Activated naive CD4-positive, alpha-beta T cell treated with anti-CD3 and anti-CD28 coated beads for 36 hours (primary cell): ENCODE measurements at regions of chr11 and their contacts with region 1.

Region 1: GRCh38 chr11:67353317-67354074 is at the start of gene POLD4:
- DNase-seq: peak; percentile 97
- H3K4me3 Mint-ChIP-seq: peak within 1 kb of the TSS; percentile 92
- H3K27ac Mint-ChIP-seq: peak within 1 kb of the TSS; percentile 97
- H3K4me1 Mint-ChIP-seq: peaks cover 54% of the 10 kb centered on the region
- H3K27me3 Mint-ChIP-seq: no peaks in the 10 kb centered on the region
- total RNA-seq, gene POLD4: 40.7 to 42.0 TPM

Region 2: DNA sequence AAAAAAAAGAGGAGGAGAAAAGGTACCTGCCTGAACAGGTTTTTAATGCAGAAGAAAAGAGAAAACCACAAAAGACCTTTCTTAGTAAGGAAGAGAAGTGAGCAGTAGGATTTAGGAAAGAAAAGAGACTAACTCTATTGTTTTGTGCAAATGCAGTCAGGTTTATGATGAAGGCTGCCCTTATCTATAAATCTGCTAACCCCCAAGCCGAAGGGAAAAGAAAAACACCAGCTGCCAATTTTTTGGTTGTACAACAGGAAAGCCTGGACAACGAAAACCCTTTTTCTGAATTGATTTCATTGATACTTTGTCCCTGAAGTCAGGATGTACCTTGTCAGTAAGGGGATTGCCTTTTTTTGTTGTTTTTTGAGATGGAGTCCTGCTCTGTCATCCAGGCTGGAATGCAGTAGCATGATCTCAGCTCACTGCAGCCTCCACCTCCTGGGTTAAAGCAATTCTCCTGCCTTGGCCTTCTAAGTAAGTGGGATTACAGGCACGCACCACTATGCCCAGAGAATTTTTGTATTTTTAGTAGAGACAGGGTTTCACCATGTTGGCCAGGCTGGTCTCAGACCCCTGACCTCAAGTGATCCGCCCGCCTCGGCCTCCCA is 21.3 kb before region 1 on chr11:
- CTCF ChIA-PET with region 1: interaction called, 12 read pairs
- intact Hi-C with region 1: no loop called
- DNase-seq: no peak
- H3K4me3 Mint-ChIP-seq: no peak overlapping the region
- H3K27ac Mint-ChIP-seq: no peak overlapping the region
- H3K4me1 Mint-ChIP-seq: no peaks in the 10 kb centered on the region
- H3K27me3 Mint-ChIP-seq: no peaks in the 10 kb centered on the region

Region 3: DNA sequence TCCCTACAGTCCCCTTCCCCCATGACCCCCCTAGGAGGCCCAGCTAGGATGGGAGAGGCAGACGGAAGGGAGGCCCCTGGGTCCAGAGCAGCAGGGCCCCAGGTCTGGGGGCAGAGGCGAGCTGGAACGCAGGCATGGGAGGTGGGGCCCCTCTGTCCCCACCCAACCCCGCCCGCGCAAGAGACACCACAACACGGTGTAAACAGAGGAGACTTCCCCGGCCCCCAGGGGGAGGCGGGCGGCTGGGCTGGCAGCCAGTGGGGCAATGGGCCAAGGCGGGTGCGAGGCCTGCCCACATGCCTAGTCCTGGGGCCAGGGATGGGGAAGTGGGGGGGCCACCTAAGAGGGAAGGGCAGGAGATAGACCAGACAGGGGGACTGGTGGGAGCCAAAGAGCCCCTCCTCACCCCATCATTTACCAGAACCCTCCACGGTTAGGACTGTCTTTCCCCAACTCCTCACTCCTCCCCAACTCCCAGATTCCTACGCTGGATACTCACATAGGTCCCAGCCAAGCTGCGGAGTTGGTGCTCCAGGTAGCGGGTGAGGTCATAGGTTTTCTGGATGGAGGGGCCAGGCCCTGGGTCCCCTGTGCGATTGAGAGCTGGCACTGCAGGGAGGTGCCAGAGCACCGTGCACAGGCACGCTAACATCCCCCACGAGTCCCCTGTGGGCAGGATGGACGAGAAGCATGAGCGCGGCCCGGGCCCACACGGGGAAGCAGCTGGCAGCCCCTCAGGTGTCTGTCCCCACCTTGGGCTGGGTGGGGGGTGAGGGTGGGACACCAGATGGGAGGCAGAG is 13.7 kb after region 1 on chr11:
- CTCF ChIA-PET with region 1: interaction called, 636 read pairs
- intact Hi-C with region 1: no loop called
- DNase-seq: no peak
- H3K4me3 Mint-ChIP-seq: no peak overlapping the region
- H3K27ac Mint-ChIP-seq: no peak overlapping the region
- H3K4me1 Mint-ChIP-seq: peaks cover 21% of the 10 kb centered on the region
- H3K27me3 Mint-ChIP-seq: peaks cover 13% of the 10 kb centered on the region

Region 4: DNA sequence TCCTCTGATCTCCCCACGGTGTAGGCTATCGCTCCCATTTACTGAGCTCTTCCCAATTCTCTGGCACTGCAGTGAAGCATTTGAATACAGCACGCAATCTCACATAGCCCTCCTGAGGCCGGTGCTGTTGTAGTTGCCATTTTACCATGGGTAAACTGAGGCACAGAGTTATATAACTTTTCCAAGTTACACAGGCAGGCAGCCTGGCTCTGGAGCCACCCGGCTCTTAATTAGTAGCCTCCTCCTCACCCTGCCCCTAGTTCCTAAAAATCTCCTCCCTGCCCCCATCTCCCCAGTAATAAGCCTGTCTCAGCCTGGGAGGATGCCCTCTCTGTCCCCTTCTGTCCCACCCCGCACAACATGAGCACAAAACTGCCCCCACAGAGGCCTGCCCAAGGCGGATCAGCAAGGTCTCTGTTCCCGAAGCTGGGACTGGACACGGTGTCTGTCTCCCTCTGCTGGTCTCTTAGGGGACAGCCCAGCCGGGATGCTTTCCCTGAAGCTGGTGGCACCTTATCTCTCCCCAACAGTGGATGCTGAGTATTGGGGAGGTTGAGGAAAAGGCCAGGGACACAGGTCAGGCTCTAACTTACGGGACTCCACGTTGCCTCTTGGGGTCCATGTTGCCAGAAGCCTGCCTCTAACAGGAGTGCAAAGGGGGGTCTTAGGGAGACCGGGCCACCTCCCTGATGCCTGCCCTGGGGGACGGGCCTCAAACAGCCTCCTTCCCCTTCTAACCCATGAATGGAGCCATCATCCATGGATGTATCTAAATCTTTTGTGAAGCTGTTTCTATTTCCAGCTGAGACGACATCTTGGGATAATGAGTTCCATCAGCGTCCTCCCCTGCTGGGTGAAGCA is 29.0 kb after region 1 on chr11:
- CTCF ChIA-PET with region 1: interaction called, 636 read pairs
- intact Hi-C with region 1: loop called (anchors 1 kb)
- DNase-seq: peak; percentile 92
- H3K4me3 Mint-ChIP-seq: no peak overlapping the region
- H3K27ac Mint-ChIP-seq: no peak overlapping the region
- H3K4me1 Mint-ChIP-seq: peaks cover 2% of the 10 kb centered on the region
- H3K27me3 Mint-ChIP-seq: peaks cover 2% of the 10 kb centered on the region

Region 5: DNA sequence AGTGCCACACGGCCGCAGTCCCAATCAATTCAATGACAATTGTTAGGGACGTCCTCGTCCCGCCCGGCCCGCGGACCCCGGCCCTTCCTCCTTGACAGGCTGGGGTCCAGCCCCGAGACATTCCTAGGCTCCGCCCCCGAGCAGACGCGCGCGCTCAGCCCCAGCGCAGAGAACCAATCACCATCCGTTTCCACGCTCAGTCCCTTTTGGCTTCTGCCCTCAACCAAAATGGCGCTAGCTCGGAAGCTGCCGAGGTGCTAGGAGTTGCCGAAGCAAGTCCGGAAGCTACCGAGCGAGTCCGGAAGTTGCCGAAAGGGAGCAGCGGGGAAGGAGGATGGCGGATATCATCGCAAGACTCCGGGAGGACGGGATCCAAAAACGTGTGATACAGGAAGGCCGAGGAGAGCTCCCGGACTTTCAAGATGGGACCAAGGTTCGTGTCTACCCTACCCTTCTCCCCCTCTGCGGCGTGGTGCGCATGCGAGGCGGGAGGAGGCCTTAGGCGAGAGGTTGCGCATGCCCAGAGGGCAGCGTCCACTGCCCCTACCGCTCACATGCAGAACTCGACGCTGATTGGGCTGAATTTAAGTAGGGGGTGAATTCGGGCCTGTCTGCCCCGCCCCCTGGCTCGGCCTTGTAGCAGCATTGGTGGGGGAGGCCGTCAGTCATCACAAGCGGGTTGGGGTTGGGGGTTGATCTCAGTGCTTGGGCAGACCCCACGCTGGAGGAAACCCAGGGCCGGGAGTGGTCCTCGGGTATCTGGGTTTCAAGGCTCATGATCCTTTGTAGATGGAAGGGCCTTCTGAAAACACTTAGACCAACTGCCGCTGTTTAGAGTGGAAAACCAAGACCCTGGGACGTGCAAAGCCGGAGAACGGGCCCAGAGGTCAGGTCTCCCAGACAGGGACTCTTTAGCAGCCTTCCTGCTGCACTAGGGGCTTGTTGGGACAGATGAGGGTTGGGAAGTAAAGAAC is 129.6 kb after region 1 on chr11 and contains the start of gene AIP:
- CTCF ChIA-PET with region 1: no interaction called
- intact Hi-C with region 1: loop called (anchors 1 kb)
- DNase-seq: peak; percentile 99
- H3K4me3 Mint-ChIP-seq: peak within 1 kb of the TSS; percentile 94
- H3K27ac Mint-ChIP-seq: peak within 1 kb of the TSS; percentile 99
- H3K4me1 Mint-ChIP-seq: peaks cover 34% of the 10 kb centered on the region
- H3K27me3 Mint-ChIP-seq: no peaks in the 10 kb centered on the region
- total RNA-seq, gene AIP: 163 to 166 TPM

Region 6: GRCh38 chr11:67583247-67584204 is 230.0 kb after region 1 on chr11 and contains the start of gene GSTP1:
- CTCF ChIA-PET with region 1: interaction called, 4 read pairs
- intact Hi-C with region 1: loop called (anchors 5 kb)
- DNase-seq: peak; percentile 81
- H3K4me3 Mint-ChIP-seq: peak within 1 kb of the TSS; percentile 94
- H3K27ac Mint-ChIP-seq: peak within 1 kb of the TSS; percentile 85
- H3K4me1 Mint-ChIP-seq: peaks cover 47% of the 10 kb centered on the region
- H3K27me3 Mint-ChIP-seq: peaks cover 3% of the 10 kb centered on the region
- total RNA-seq, gene GSTP1: 398 to 403 TPM

Region 7: DNA sequence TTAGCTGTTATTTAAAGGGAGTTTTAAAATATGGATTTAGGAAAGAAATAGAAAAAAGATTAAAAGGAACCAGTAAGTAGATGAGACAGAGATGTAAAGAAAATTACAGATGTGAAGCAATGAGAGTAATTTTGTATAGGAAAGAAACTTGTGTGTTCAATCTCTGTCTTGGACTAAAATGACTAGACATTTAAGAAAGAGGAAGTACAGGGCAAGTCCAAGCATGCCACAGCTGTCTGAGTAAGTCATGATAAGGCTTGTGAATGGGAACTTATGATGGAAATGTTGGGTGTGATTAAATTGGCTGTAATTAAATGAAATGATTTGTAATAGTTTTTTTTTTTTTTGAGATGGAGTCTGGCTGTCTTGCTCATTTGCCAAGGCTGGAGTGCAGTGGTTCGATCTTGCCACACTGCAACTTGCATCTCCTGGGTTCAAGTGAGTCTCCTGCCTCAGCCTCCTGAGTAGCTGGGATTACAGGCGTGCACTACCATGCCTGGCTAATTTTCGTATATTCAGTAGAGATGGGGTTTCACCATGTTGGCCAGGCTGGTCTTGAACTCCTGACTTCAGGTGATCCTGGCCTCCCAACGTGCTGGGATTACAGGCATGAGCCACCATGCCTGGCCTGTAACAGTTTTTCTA is 302.9 kb after region 1 on chr11:
- CTCF ChIA-PET with region 1: interaction called, 3 read pairs
- intact Hi-C with region 1: loop called (anchors 5 kb)
- DNase-seq: peak; percentile 41
- H3K4me3 Mint-ChIP-seq: no peak overlapping the region
- H3K27ac Mint-ChIP-seq: no peak overlapping the region
- H3K4me1 Mint-ChIP-seq: peaks cover 10% of the 10 kb centered on the region
- H3K27me3 Mint-ChIP-seq: no peaks in the 10 kb centered on the region